ENCODE measurements at regions of chr12 and their contacts with region 1.

Region 1: DNA sequence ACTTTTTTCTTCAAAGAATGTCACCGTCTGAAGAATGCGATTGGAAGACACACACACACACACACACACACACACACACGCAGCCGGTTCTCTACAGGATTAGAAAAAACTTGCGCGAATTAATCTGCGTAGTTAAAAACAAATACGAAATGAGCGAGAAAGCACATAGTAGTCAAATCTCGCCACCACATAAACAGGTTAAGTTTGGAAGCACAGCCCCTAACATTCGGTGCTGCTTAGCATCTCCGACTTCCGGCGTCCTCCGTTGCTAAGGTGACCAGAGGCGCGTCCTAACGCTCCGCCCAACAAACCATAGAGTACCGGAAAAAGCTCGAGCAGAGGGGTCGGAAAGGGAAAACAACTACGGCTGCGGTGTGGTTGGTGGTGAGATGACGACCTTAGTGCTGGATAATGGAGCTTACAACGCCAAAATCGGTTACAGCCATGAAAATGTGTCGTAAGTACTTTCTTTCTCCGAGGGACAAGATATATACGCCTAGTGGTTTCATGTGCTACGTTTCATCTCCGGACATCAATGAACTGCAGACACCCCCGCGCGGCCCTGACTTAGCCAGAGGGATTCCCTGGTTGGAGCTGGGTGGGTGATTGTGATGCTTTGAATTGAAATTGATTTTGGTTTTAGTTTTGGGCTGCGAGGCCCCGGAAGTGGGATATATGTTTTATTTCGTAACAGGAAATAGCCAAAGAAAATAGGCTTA is at the start of gene ACTR6:
- DNase-seq: peak; percentile 96
- ATAC-seq: peak; percentile 98
- total RNA-seq, gene ACTR6: 19.4 TPM

Region 2: GRCh38 chr12:100142851-100143559 is 57.6 kb before region 1 on chr12 and contains the start of gene BLTP3B:
- intact Hi-C with region 1: loop called (anchors 5 kb)
- DNase-seq: peak; percentile 97
- ATAC-seq: peak; percentile 99
- total RNA-seq, gene BLTP3B: 10.7 TPM

Region 3: DNA sequence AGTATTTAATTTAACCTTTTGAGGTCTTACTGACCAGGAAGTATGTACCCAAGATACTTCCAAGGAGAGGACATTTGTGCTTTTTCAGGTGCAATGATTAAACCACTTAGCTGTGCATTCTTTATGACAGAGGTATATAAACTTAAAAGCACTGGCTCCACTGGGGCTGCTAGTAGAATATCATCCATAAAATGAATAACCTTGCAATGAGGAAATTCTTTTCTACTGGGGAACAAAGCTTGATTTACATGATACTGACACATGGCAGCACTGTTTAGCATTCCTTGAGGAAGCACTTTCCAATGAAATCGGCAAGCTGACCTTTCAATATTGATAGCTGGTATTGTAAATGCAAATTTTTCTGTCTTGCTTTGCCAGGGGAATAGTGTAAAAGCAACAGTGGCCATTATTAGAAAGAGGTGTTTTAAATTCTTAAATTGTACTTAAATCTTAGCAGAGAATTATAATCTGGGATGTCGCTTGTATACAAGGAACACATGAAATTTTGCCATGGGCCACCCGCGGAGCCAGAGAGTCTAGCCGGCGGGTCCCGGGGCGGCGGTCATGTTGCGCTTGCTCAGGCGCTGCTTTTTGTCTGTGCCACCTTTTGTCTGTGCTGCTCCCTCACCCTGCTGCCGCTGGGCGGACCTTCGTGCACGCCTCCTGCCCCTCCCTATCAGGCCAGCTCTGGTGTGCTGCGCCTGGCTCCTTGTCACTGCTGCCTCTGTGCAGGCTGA is 37.0 kb before region 1 on chr12:
- intact Hi-C with region 1: loop called (anchors 5 kb)
- DNase-seq: peak; percentile 89
- ATAC-seq: peak; percentile 99

Region 4: DNA sequence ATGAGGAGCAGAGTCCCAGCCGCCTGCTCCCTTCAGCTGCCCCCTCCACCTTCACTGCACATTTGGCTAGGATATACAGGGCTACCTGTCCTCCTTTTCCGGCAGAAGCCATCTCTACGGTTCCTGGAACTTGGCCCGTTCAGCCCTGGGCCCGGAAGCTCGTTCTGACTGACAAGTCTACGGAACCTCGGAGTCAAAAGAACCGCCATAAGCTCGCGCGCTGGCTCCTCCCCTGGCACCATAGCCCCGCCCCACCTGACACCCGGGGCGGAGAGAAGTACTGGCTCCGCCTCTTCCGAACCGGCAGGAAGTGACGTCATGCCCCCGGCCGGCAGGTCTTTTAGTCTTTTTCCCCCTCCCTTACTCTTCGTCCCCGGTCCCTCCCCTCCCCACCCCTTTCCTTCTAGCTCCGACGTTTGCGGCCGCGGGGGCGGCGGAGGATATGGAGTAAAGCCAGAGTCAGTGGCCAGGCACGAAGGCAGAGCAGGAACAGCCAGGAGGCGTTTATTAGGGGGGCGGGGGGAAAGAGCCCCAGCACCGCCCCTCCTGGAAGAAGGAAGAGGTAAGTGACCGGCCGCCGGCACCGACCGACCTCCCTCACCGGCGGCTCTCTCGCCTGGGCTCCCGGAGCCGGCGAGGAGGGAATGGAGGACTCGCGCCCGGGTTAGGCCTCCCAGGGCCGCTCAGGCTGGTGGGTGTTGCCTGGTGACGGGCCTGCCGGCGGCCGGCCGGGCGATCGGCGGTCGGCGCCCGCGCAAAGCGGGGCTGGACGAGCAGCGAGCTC is 66.4 kb after region 1 on chr12 and contains the starts of genes DEPDC4 and SCYL2:
- intact Hi-C with region 1: loop called (anchors 2 kb)
- DNase-seq: peak; percentile 98
- ATAC-seq: peak; percentile 98
- total RNA-seq, gene DEPDC4: 0.81 TPM
- total RNA-seq, gene SCYL2: 30.5 TPM

Region 5: GRCh38 chr12:100955139-100955538 is 754.5 kb after region 1 on chr12:
- intact Hi-C with region 1: no loop called
- DNase-seq: no peak
- ATAC-seq: no peak

Measured in Right ventricle myocardium inferior (tissue), 1 donor.